CD14-positive monocyte (primary cell): ENCODE measurements at regions of chr19 and their contacts with region 1.

Region 1: DNA sequence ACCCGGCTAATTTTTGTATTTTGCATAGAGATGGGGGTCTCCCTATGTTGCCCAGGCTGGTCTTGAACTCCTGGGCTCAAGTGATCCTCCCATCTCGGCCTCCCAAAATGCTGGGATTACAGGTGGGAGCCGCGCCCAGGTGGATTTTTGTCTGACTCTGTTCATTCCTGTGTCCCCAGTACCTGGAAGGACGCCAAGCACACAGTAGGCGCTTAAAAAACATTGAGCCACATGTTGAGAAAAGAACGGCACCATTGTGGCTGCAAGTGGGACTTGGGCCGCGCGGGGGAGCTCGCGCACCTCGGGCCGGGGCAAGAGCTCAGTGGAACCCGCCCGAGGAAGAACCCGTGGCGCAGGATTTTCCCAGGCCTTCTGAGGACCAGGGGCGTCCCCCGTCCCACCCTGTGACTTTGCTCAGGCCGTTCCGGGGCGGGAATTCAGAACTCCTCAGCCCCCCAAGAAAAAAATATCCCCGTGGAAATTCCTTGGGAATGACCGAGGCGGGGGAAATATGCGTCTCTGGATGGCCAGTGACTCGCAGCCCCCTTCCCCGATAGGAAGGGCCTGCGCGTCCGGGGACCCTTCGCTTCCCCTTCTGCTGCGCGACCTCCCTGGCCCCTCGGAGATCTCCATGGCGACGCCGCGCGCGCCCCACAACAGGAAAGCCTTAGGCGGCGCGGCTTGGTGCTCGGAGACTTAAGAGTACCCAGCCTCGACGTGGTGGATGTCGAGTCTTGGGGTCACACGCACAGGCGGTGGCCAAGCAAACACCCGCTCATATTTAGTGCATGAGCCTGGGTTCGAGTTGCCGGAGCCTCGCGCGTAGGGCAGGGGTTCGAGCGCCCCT is 1.4 kb upstream of the ICAM1 start:
- DNase-seq: peak; percentile 84 to 97 (median 85)
- H3K4me3 ChIP-seq: peak overlapping the region; percentile 75 to 96 (median 76)
- H3K4me3 Mint-ChIP-seq: peak overlapping the region; percentile 88 to 93
- H3K27ac ChIP-seq: peak overlapping the region; percentile 95 to 96
- H3K27ac Mint-ChIP-seq: peak overlapping the region; percentile 97 to 99 (median 98)
- H3K4me1 ChIP-seq: peaks cover 42 to 51% of the 10 kb centered on the region in 2 donors
- H3K4me1 Mint-ChIP-seq: peaks cover 38% of the 10 kb centered on the region
- H3K27me3 ChIP-seq: no peaks in the 10 kb centered on the region
- H3K27me3 Mint-ChIP-seq: peaks cover 2 to 4% (median 3%) of the 10 kb centered on the region in 3 donors
- CTCF ChIP-seq: peak; percentile 98

Region 2: GRCh38 chr19:10346509-10346908 is 77.0 kb after region 1 on chr19:
- intact Hi-C with region 1: loop called in 1 of 2 experiments (anchors 2 kb)
- DNase-seq: peak; percentile 87 to 92 (median 91)
- H3K4me3 ChIP-seq: peak overlapping the region in 1 of 3 experiments; percentile 48
- H3K4me3 Mint-ChIP-seq: peak overlapping the region; percentile 53 to 67
- H3K27ac ChIP-seq: peak overlapping the region; percentile 93 to 96
- H3K27ac Mint-ChIP-seq: peak overlapping the region; percentile 97 to 99 (median 99)
- H3K4me1 ChIP-seq: peaks cover 28 to 32% of the 10 kb centered on the region in 2 donors
- H3K4me1 Mint-ChIP-seq: peaks cover 23% of the 10 kb centered on the region
- H3K27me3 ChIP-seq: no peaks in the 10 kb centered on the region
- H3K27me3 Mint-ChIP-seq: peaks cover 0 to 2% (median 1%) of the 10 kb centered on the region in 3 donors
- CTCF ChIP-seq: no peak

Region 3: GRCh38 chr19:10380313-10381102 is 111.0 kb after region 1 on chr19 and contains the start of gene TYK2:
- intact Hi-C with region 1: loop called in 1 of 2 experiments (anchors 2 kb)
- DNase-seq: peak; percentile 98 to 99 (median 99)
- H3K4me3 ChIP-seq: peak within 1 kb of the TSS; percentile 84 to 98 (median 87)
- H3K4me3 Mint-ChIP-seq: peak within 1 kb of the TSS; percentile 93 to 95
- H3K27ac ChIP-seq: peak within 1 kb of the TSS; percentile 91 to 98
- H3K27ac Mint-ChIP-seq: peak within 1 kb of the TSS; percentile 95 to 100 (median 98)
- H3K4me1 ChIP-seq: peaks cover 48 to 52% of the 10 kb centered on the region in 2 donors
- H3K4me1 Mint-ChIP-seq: peaks cover 39% of the 10 kb centered on the region
- H3K27me3 ChIP-seq: no peaks in the 10 kb centered on the region
- H3K27me3 Mint-ChIP-seq: peaks cover 0 to 2% (median 2%) of the 10 kb centered on the region in 3 donors
- CTCF ChIP-seq: no peak
- polyA plus RNA-seq, gene TYK2: 82.9 to 441 (median 113) TPM

Region 4: DNA sequence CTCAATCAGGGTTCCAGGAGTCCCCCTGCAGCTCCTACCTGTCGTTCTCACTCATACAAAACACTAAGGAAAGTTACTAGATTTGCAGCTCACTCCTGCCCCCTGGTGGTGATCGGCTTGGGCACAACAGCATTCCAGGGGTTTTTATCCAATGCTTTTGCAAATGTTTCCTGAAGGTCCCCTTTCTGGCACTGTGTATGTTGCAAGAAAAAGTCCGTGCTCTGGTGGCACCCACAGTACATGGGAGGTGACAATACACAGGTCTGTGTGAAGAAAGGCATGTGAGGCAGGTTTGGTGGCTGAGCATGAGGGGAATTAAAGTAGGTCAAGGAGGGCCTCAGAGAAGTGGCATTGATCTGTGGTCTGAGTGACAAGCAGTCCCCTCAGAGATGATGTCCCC is 119.4 kb after region 1 on chr19:
- intact Hi-C with region 1: loop called (anchors 1 kb)
- DNase-seq: peak; percentile 73 to 85 (median 83)
- H3K4me3 ChIP-seq: no peak overlapping the region
- H3K4me3 Mint-ChIP-seq: no peak overlapping the region
- H3K27ac ChIP-seq: no peak overlapping the region
- H3K27ac Mint-ChIP-seq: peak overlapping the region in 4 of 7 donors; percentile 18 to 75 (median 60)
- H3K4me1 ChIP-seq: peaks cover 0 to 6% of the 10 kb centered on the region in 2 donors
- H3K4me1 Mint-ChIP-seq: peaks cover 5% of the 10 kb centered on the region
- H3K27me3 ChIP-seq: no peaks in the 10 kb centered on the region
- H3K27me3 Mint-ChIP-seq: peaks cover 0 to 9% (median 0%) of the 10 kb centered on the region in 3 donors
- CTCF ChIP-seq: peak; percentile 97